OCI-LY7 (cell line): ENCODE measurements at regions of chr18 and their contacts with region 1.

Region 1: DNA sequence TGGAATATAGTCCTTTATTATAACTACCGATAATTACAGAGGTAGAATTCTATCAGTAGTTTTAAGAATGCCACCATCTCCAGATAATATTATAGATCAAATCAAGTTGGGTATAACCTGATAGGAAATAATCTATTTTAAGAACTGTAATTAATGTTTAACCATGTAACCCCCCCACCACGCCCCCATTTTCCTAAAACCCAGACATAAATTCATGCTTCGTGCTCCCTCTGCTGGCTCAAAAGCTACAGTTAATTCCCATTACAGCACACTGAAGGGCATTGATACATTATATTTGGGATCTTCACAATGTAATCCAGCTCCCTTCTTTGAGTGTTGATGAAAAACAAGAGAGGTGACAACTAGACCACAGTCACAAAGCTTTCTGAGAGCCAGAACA is 228.0 kb upstream of the SMAD7 start:
- DNase-seq: peak; percentile 13
- H3K4me3 ChIP-seq: no peak overlapping the region
- H3K27ac ChIP-seq: no peak overlapping the region
- H3K4me1 ChIP-seq: peaks cover 46% of the 10 kb centered on the region
- CTCF ChIP-seq: peak; percentile 69

Region 2: GRCh38 chr18:49055754-49056172 is 123.0 kb before region 1 on chr18:
- CTCF ChIA-PET with region 1: no interaction called
- POLR2A ChIA-PET with region 1: no interaction called
- intact Hi-C with region 1: loop called (anchors 10 kb)
- DNase-seq: peak; percentile 68
- H3K4me3 ChIP-seq: no peak overlapping the region
- H3K27ac ChIP-seq: peak overlapping the region; percentile 100
- H3K4me1 ChIP-seq: peaks cover 73% of the 10 kb centered on the region
- CTCF ChIP-seq: no peak

Region 3: GRCh38 chr18:49139766-49140165 is 39.0 kb before region 1 on chr18:
- CTCF ChIA-PET with region 1: no interaction called
- POLR2A ChIA-PET with region 1: no interaction called
- intact Hi-C with region 1: no loop called
- DNase-seq: no peak
- H3K4me3 ChIP-seq: no peak overlapping the region
- H3K27ac ChIP-seq: no peak overlapping the region
- H3K4me1 ChIP-seq: no peaks in the 10 kb centered on the region
- CTCF ChIP-seq: no peak

Region 4: DNA sequence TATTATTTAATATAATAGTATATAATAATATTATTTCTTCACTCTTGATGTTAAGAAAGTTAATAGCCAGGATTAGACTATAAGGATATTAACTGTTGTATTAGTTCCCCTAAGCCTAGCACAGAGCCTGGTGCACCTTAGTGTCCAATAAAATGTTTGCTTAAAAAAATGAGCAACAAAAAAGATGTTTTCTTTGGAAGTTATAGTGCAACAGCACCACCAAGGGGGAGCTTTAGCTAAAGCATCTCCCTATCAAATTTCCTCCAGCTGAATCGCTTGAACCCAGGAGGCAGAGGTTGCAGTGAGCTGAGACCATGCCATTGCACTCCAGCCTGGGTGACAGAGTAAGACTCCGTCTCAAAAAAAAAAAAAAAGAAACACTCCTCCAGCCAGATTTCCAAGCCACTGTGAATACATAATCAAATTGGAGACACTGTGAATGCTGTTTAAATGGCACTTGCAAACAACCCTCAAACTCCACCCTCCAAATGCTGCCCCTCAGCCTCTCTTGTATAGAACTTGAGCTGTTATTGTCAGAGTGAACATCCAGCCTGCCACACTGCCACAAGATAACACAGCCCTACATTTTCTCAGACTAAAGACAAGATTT is 59.8 kb after region 1 on chr18:
- CTCF ChIA-PET with region 1: no interaction called
- POLR2A ChIA-PET with region 1: no interaction called
- intact Hi-C with region 1: no loop called
- DNase-seq: peak; percentile 44
- H3K4me3 ChIP-seq: no peak overlapping the region
- H3K27ac ChIP-seq: no peak overlapping the region
- H3K4me1 ChIP-seq: peaks cover 9% of the 10 kb centered on the region
- CTCF ChIP-seq: peak; percentile 69